Naive thymus-derived CD4-positive, alpha-beta T cell (primary cell): ENCODE measurements at regions of chr12 and their contacts with region 1.

Region 1: DNA sequence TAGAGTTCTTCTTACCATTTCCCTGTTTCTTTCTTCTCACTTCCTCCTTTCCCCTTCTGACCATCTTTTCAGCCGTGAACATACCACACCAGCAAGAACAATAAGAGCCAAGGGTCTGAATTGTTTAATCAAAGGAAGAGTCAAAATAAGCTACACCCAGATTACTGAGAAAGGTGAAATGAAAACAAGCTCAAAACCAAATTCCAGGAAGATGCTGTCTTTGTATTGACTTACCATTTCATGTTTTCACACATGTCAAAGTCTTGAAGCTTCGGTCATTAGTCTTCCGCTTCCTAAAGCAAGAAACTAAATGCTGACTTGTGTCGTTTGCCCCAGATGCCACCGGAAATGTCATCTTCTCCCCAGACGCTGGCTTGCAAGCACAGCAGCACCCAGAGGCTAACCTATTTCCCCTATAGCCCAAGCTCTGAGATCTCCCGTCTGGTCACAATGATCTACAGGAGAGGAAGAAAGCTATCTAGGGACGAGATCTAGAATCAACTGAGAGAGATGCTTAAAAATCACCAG is 136.5 kb upstream of the AMIGO2 start:
- DNase-seq: peak in 8 of 9 donors; percentile 56 to 82 (median 72)
- ATAC-seq: peak; percentile 81
- H3K4me3 ChIP-seq: peak overlapping the region; percentile 80
- H3K4me3 Mint-ChIP-seq: peak overlapping the region; percentile 91 to 100 (median 98)
- H3K27ac ChIP-seq: peak overlapping the region; percentile 76
- H3K27ac Mint-ChIP-seq: peak overlapping the region; percentile 91 to 98 (median 96)
- H3K4me1 ChIP-seq: peaks cover 9 to 14% of the 10 kb centered on the region in 2 donors
- H3K4me1 Mint-ChIP-seq: peaks cover 6 to 52% (median 26%) of the 10 kb centered on the region in 7 donors
- H3K27me3 ChIP-seq: no peaks in the 10 kb centered on the region
- H3K27me3 Mint-ChIP-seq: peaks cover 0 to 4% (median 0%) of the 10 kb centered on the region in 5 donors

Region 2: GRCh38 chr12:46268590-46269558 is 947.3 kb before region 1 on chr12 and contains the start of gene SLC38A1:
- CTCF ChIA-PET with region 1: no interaction called
- POLR2A ChIA-PET with region 1: interaction called, 5 read pairs
- intact Hi-C with region 1: loop called (anchors 5 kb)
- DNase-seq: peak; percentile 73 to 92 (median 88)
- ATAC-seq: peak; percentile 81
- H3K4me3 ChIP-seq: peak within 1 kb of the TSS; percentile 93
- H3K4me3 Mint-ChIP-seq: no peak within 1 kb of the TSS
- H3K27ac ChIP-seq: peak within 1 kb of the TSS; percentile 98
- H3K27ac Mint-ChIP-seq: no peak within 1 kb of the TSS
- H3K4me1 ChIP-seq: peaks cover 35 to 40% of the 10 kb centered on the region in 2 donors
- H3K4me1 Mint-ChIP-seq: peaks cover 9 to 35% (median 31%) of the 10 kb centered on the region in 7 donors
- H3K27me3 ChIP-seq: no peaks in the 10 kb centered on the region
- H3K27me3 Mint-ChIP-seq: no peaks in the 10 kb centered on the region
- total RNA-seq, gene SLC38A1: 172 to 283 (median 249) TPM

Region 3: DNA sequence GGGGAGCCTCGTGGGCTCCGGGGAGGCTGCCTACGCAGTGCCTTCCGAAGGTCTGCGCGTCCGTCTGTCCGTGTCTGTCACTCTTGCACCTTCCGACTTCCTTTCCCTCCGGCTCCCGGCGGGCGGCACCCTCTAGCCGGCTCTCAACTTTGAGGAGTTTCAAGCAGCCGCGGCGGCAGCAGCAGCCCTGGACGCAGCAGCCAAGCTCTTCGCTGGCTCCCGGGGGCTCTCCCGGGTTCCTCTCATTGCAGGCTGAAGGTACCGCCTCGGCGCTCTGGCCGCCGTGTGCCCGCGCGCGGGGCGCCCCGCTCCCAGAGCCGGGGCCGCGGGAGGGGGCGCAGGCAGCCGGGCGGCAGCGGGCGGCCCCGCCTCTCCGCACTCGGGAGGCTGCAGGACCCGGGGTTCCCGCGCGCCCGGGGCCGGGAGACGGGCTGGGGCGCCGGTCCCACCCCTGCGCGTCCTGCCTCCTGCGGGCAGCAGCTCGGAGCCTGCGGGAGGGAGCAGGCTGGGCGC is 136.7 kb before region 1 on chr12 and contains the starts of genes AMIGO2 and PCED1B:
- CTCF ChIA-PET with region 1: interaction called, 3 read pairs
- POLR2A ChIA-PET with region 1: interaction called, 58 read pairs
- intact Hi-C with region 1: loop called (anchors 1 kb)
- DNase-seq: peak; percentile 31 to 72 (median 51)
- ATAC-seq: peak; percentile 71
- H3K4me3 ChIP-seq: peak within 1 kb of the TSS; percentile 84
- H3K4me3 Mint-ChIP-seq: peak within 1 kb of the TSS; percentile 91 to 100 (median 96)
- H3K27ac ChIP-seq: peak within 1 kb of the TSS; percentile 80
- H3K27ac Mint-ChIP-seq: peak within 1 kb of the TSS; percentile 87 to 99 (median 96)
- H3K4me1 ChIP-seq: peaks cover 39 to 45% of the 10 kb centered on the region in 2 donors
- H3K4me1 Mint-ChIP-seq: peaks cover 44 to 83% (median 74%) of the 10 kb centered on the region in 7 donors
- H3K27me3 ChIP-seq: no peaks in the 10 kb centered on the region
- H3K27me3 Mint-ChIP-seq: no peaks in the 10 kb centered on the region
- total RNA-seq, gene AMIGO2: 6.8 to 13.5 (median 12.8) TPM
- total RNA-seq, gene PCED1B: 41.4 to 98.3 (median 70.0) TPM

Region 4: DNA sequence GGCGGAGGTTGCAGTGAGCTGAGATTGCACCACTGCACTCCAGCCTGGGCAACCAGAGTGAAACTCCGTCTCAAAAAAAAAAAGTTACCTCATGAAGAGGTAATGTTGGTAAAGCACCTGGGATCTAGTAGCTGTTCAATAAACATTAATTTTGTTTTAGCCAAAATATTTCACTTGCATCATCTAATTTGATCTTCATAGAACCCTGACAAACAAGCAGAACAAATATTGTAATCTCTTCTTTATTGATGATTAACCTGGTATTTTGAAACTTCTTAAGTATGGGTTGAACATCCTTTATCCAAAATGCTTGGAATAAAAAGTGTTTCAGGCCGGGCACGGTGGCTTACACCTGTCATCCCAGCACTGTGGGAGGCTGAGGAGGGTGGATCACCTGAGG is 12.6 kb after region 1 on chr12:
- CTCF ChIA-PET with region 1: interaction called, 9 read pairs
- POLR2A ChIA-PET with region 1: interaction called, 14 read pairs
- intact Hi-C with region 1: loop called in 1 of 2 experiments (anchors 1 kb)
- DNase-seq: no peak
- ATAC-seq: no peak
- H3K4me3 ChIP-seq: no peak overlapping the region
- H3K4me3 Mint-ChIP-seq: peak overlapping the region in 5 of 10 donors; percentile 14 to 93 (median 29)
- H3K27ac ChIP-seq: no peak overlapping the region
- H3K27ac Mint-ChIP-seq: peak overlapping the region in 5 of 9 donors; percentile 59 to 88 (median 68)
- H3K4me1 ChIP-seq: peaks cover 30 to 37% of the 10 kb centered on the region in 2 donors
- H3K4me1 Mint-ChIP-seq: peaks cover 43 to 81% (median 72%) of the 10 kb centered on the region in 7 donors
- H3K27me3 ChIP-seq: no peaks in the 10 kb centered on the region
- H3K27me3 Mint-ChIP-seq: no peaks in the 10 kb centered on the region

Region 5: DNA sequence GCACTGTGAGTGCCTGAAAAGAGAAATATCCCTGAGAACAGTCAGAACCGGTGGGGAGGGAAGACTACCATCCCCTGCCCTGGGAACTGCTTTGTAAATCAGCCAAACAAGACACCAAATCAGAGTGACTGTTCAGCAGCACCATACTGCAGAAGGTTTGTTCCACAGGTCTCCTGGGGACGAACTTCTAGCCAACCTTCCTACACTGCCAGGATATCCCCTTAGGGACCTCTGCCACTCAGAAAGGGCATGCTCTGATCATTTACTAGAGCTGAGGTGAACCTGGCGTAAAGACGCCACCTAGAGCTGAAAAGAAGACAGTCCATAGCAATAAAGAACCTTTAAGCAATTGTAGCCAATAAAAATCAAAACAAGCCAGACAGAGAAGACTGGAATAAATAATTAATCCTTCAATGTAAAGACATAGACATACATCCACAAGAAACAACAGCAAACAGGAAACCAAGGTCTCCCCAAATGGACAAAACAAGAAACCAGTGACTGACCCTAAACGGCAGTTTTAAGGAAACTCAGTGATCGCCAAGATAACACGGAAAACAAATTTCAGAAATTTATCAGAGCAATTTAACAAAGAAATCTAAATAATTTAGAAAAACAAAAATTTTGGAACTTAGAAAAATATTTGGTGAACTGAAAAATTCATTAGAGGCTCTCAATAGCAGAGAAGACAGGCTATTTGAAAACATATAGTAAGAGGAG is 91.6 kb after region 1 on chr12:
- CTCF ChIA-PET with region 1: interaction called, 11 read pairs
- POLR2A ChIA-PET with region 1: interaction called, 68 read pairs
- intact Hi-C with region 1: loop called (anchors 1 kb)
- DNase-seq: peak in 8 of 9 donors; percentile 39 to 76 (median 62)
- ATAC-seq: peak; percentile 96
- H3K4me3 ChIP-seq: peak overlapping the region; percentile 56
- H3K4me3 Mint-ChIP-seq: peak overlapping the region; percentile 91 to 98 (median 94)
- H3K27ac ChIP-seq: peak overlapping the region; percentile 69
- H3K27ac Mint-ChIP-seq: peak overlapping the region; percentile 89 to 97 (median 95)
- H3K4me1 ChIP-seq: peaks cover 0 to 3% of the 10 kb centered on the region in 2 donors
- H3K4me1 Mint-ChIP-seq: peaks cover 27 to 61% (median 51%) of the 10 kb centered on the region in 7 donors
- H3K27me3 ChIP-seq: no peaks in the 10 kb centered on the region
- H3K27me3 Mint-ChIP-seq: no peaks in the 10 kb centered on the region

Region 6: GRCh38 chr12:47705566-47706425 is 489.6 kb after region 1 on chr12 and contains the start of gene RPAP3:
- CTCF ChIA-PET with region 1: no interaction called
- POLR2A ChIA-PET with region 1: interaction called, 4 read pairs
- intact Hi-C with region 1: loop called (anchors 1 to 5 kb)
- DNase-seq: peak; percentile 91 to 99 (median 95)
- ATAC-seq: peak; percentile 97
- H3K4me3 ChIP-seq: peak within 1 kb of the TSS; percentile 59
- H3K4me3 Mint-ChIP-seq: peak within 1 kb of the TSS; percentile 92 to 99 (median 98)
- H3K27ac ChIP-seq: peak within 1 kb of the TSS; percentile 85
- H3K27ac Mint-ChIP-seq: peak within 1 kb of the TSS; percentile 93 to 99 (median 97)
- H3K4me1 ChIP-seq: peaks cover 21 to 27% of the 10 kb centered on the region in 2 donors
- H3K4me1 Mint-ChIP-seq: peaks cover 48 to 73% (median 63%) of the 10 kb centered on the region in 7 donors
- H3K27me3 ChIP-seq: no peaks in the 10 kb centered on the region
- H3K27me3 Mint-ChIP-seq: no peaks in the 10 kb centered on the region
- total RNA-seq, gene RPAP3: 28.5 to 51.3 (median 43.9) TPM